Activated T-helper 1 cell treated with anti-CD3 and anti-CD28 coated beads, Interleukin-12 subunit alpha, Interleukin-12 subunit beta, Interleukin-2, Interleukin-4 antibody, amounts not matched to agents 30 ng/mL and 10 ng/mL and 1 ng/mL, durations not matched to agents 14 hours and 24 hours and 36 hours (primary cell): ENCODE measurements at regions of chr5 and their contacts with region 1.

Region 1: DNA sequence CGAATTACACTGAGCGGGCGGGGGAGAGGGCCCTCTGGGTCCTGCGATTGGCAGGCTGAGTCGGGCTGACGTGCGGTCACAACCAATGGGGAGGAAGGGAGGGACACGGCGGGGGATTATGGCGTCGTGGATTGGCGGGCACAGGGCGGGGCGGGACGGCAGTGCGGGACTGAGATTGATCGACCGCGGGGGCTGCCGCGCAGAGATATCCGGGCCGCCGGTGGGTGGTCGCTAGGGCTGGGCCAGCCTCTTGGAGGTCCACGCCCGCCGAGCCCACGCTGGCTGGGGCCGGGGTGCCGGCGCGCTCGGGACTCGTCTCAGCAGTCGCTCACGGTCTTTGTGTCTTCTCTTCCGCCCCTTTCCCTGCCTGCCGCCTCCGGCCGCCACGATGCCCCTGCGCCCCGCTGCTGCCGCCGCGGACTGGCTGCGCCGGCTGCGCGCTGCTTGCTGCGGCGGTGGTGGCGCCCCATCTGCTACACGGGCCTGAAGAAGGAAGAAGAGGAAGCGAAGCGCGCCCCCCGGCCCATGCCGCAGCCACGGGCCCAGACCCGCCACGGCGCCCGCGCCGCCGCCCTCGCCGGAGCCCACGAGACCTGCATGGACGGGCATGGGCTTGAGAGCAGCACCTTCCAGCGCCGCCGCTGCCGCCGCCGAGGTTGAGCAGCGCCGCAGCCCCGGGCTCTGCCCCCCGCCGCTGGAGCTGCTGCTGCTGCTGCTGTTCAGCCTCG is at the start of gene RGMB:
- DNase-seq: peak; percentile 77
- H3K4me3 Mint-ChIP-seq: peak within 1 kb of the TSS; percentile 93
- H3K27ac Mint-ChIP-seq: peak within 1 kb of the TSS; percentile 52
- H3K4me1 Mint-ChIP-seq: peaks cover 50% of the 10 kb centered on the region
- H3K27me3 Mint-ChIP-seq: peaks cover 79% of the 10 kb centered on the region
- total RNA-seq, gene RGMB: 0.29 and 0.39 TPM in 2 replicates

Region 2: DNA sequence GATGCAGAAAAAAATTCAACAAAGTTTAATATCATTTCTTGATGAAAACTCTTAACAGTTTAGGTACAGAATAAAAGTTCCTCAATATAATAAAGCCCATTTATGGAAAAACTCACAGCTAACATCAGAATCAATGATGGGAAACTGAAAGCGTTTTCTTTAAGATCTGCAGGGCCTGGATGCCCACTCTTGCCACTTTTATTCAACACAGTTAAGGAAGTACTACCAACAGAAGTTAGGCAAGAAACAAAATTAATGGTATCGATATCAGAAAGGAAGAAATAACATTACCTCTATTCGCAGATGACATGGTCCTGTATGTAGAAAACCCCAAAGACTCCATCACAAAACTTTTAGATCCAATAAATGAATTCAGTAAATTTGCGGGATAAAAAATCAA is 542.5 kb before region 1 on chr5:
- intact Hi-C with region 1: loop called (anchors 5 kb)
- DNase-seq: no peak
- H3K4me3 Mint-ChIP-seq: no peak overlapping the region
- H3K27ac Mint-ChIP-seq: no peak overlapping the region
- H3K4me1 Mint-ChIP-seq: no peaks in the 10 kb centered on the region
- H3K27me3 Mint-ChIP-seq: no peaks in the 10 kb centered on the region

Region 3: DNA sequence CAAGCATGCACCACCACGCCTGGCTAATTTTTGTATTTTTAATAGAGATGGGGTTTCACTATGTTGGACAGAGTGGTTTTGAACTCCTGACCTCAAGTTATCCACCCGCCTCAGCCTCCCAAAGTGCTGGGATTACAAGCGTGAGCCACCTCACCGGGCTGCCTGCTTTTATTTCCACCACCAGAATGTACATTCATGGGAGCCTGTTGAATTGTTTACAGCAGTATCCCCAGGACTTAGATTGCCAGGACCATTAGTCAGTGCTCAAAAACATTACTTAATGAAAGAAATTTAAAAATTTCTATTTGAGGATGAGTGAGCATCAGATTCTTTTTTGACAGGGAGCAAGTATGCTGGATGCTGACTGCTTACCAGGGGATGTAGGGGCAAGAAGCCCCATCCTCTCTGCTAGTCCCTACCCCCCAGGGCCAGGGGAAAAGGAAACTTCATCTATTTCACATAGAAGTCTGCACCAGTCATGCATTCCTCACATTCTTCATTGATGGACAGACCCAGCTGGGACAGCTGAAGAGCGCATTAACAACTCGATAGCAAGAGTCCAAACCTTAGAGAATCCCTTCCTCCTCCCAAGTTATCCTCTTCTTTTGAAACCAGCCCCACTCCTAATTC is 10.5 kb before region 1 on chr5:
- intact Hi-C with region 1: no loop called
- DNase-seq: no peak
- H3K4me3 Mint-ChIP-seq: no peak overlapping the region
- H3K27ac Mint-ChIP-seq: no peak overlapping the region
- H3K4me1 Mint-ChIP-seq: peaks cover 1% of the 10 kb centered on the region
- H3K27me3 Mint-ChIP-seq: peaks cover 42% of the 10 kb centered on the region

Region 4: GRCh38 chr5:99060306-99061261 is 287.0 kb after region 1 on chr5:
- intact Hi-C with region 1: loop called (anchors 2 kb)
- DNase-seq: peak; percentile 69
- H3K4me3 Mint-ChIP-seq: no peak overlapping the region
- H3K27ac Mint-ChIP-seq: no peak overlapping the region
- H3K4me1 Mint-ChIP-seq: peaks cover 5% of the 10 kb centered on the region
- H3K27me3 Mint-ChIP-seq: peaks cover 16% of the 10 kb centered on the region